PC-3 (cell line): ENCODE measurements at regions of chr6 and their contacts with region 1.

Region 1: GRCh38 chr6:99467509-99468106 is 42.5 kb upstream of the PNISR start:
- DNase-seq: peak; percentile 34
- ATAC-seq: no peak
- H3K4me3 ChIP-seq: no peak overlapping the region
- H3K27ac ChIP-seq: no peak overlapping the region
- H3K4me1 ChIP-seq: no peaks in the 10 kb centered on the region
- H3K27me3 ChIP-seq: no peaks in the 10 kb centered on the region
- CTCF ChIP-seq: peak; percentile 56

Region 2: DNA sequence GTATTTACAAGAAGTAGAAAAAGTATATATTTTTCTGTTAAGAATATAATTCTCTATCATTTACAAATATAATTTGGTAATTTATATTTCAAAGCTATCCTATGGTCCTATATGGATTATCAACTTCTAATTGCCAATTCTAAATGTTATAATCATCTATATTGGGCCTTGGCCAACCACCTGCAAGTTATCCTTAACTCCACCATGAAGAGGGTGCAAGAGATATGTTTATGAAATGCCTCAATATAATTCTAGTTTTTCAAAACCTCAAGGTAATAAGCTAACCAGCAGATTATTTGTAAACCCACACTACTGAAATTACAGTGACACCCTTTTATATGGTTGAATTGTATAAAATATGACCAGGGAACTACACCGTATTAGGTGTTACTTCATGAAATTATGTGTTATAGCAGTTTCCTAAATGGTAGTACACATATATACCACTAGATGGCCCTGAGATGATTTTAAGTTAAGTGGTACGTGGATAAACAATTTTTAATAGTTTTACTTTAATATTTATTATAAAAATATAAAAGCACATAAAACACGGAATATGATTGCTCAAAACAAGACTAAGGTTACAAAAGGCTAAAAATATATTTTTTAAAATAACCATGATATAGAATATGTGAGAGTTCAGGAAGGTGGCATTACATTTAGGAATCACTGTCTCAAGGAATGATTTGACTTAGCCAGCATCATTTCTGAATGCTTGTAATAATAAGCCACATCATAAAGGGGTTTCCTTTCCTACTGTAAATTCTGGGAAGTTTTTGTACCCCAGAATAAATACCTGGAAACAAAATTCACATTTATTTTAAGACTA is 32.7 kb before region 1 on chr6:
- CTCF ChIA-PET with region 1: no interaction called
- POLR2A ChIA-PET with region 1: no interaction called
- intact Hi-C with region 1: no loop called
- DNase-seq: peak; percentile 43
- ATAC-seq: peak; percentile 35; the same call in 1 of the 2 replicates
- H3K4me3 ChIP-seq: no peak overlapping the region
- H3K27ac ChIP-seq: no peak overlapping the region
- H3K4me1 ChIP-seq: no peaks in the 10 kb centered on the region
- H3K27me3 ChIP-seq: no peaks in the 10 kb centered on the region
- CTCF ChIP-seq: peak; percentile 46

Region 3: DNA sequence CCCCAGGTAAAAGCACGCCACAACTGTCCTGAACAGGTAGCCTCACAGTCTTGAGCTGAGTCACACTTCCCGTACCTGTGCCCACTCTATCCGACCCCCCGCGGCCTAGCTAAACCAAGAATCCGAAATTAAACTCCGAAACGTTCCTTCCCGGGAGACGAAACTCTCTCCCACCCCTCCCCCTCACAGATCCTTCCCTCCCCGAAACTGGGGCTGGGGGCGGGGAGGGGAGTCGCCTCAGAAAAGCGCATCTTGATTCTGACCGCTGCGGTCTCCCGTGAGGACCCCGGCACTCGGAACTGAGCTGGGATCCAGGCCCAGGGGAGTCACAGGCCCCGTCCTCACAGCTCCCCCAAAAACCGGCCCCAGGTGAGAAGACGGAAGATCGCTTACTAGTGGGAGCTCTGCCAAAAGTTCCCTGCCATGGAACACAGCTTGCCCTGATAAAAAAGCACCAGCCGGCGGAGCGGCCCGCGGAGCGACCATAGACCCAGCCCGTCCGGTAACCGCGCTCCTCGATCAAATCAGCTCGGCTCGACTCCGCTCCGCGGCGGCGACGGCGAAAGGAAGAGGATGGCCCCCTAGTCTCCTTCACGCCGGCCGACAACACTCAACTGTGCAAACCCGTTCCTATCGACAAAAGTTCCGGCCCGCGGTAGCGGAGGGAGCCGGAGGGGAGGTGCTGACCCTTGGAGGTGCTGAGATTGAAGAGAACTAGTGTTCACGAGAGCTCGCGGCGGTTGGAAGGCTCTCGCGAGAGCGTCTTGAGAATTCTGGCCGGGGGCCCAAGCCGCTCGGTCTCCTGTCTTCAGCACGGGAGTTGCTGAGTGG is 100.7 kb after region 1 on chr6 and contains the start of gene CCNC:
- CTCF ChIA-PET with region 1: no interaction called
- POLR2A ChIA-PET with region 1: no interaction called
- intact Hi-C with region 1: loop called (anchors 10 kb)
- DNase-seq: peak; percentile 95
- ATAC-seq: peak; percentile 98
- H3K4me3 ChIP-seq: peak within 1 kb of the TSS; percentile 94
- H3K27ac ChIP-seq: peak within 1 kb of the TSS; percentile 76
- H3K4me1 ChIP-seq: peaks cover 12% of the 10 kb centered on the region; the same call in 1 of the 2 replicates
- H3K27me3 ChIP-seq: no peaks in the 10 kb centered on the region
- CTCF ChIP-seq: no peak
- total RNA-seq, gene CCNC: 53.7 and 69.3 TPM in 2 replicates